ENCODE measurements at regions of chrX and their contacts with region 1.

Region 1: DNA sequence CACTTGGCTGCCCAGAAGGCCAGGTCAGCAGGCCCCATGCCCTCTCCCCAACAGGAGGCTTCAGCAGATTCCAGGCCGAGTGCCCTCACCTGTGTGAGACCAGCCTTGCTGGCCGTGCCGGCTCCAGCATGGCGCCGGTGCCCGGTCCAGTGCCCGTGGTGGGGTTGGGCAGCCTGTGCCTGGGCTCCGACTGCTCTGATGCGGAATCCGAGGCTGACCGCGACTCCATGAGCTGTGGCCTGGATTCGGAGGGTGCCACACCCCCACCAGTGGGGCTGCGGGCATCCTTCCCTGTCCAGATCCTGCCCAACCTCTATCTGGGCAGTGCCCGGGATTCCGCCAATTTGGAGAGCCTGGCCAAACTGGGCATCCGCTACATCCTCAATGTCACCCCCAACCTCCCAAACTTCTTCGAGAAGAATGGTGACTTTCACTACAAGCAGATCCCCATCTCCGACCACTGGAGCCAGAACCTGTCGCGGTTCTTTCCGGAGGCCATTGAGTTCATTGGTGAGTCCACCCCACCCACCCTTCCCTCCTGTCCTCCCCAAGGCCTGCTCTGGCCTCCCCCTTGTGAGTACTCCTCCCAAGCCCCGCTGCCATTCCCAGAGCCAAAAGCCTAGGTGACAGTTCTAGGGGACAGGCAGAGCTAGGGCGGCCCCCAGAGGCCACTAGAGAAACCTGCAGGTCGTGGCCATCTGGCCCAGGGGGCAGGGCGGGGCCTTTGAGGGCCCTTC is 2.3 kb downstream of the DUSP9 start:
- DNase-seq: no peak
- H3K4me3 Mint-ChIP-seq: no peak overlapping the region
- H3K27ac Mint-ChIP-seq: no peak overlapping the region
- H3K4me1 Mint-ChIP-seq: no peaks in the 10 kb centered on the region
- H3K27me3 Mint-ChIP-seq: peaks cover 22% of the 10 kb centered on the region

Region 2: GRCh38 chrX:153554519-153555167 is 94.7 kb before region 1 on chrX:
- intact Hi-C with region 1: loop called (anchors 1 kb)
- DNase-seq: peak; percentile 35
- H3K4me3 Mint-ChIP-seq: no peak overlapping the region
- H3K27ac Mint-ChIP-seq: no peak overlapping the region
- H3K4me1 Mint-ChIP-seq: no peaks in the 10 kb centered on the region
- H3K27me3 Mint-ChIP-seq: peaks cover 1% of the 10 kb centered on the region

Region 3: DNA sequence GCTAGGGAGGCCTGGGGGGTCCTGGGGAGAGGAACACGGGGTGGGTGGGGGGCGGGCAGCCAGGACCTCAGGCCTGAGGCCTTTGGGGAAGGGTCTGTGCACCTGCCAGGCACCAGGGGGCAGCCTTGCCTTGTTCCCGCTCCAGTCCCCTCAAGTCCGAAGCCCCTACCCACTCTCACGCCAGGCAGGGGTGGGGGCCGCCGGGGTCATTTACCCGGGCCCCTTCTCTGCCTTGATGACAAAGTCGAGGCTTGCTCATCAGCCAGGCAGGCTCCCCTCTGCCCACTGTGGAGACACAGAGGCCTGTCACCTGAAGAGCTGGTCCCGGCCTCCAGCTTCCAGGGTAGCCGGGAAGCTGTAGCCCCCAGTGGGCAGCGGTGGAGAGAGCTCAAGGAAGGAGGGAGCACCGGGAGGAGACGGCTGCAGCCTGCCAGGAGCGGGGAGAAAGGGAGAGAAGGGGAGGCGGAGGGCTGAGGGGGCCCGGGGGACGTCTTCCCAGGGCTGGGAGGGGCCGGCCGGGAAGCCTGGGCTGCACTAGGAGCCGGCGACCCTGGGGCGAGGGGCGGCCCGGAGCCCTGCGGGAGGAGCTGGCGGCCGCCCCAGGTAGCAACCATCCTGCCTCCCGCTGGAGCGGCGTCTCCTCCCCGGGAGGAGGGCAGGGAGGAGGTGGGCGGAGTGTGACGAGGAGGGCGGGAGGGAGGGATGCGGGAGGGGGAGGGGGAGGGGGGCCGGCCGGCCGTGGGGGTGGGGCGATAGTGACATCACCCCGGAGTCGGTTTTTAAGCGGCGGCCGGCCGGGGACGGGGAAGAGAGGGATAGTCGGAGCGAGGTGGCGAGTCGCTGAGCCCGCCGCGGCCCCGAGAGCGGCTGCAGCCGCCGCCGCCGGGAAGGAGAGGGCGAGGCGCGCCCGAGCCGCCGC is 38.0 kb after region 1 on chrX and contains the start of gene SLC6A8:
- intact Hi-C with region 1: no loop called
- DNase-seq: peak; percentile 6
- H3K4me3 Mint-ChIP-seq: peak within 1 kb of the TSS; percentile 66
- H3K27ac Mint-ChIP-seq: no peak within 1 kb of the TSS
- H3K4me1 Mint-ChIP-seq: no peaks in the 10 kb centered on the region
- H3K27me3 Mint-ChIP-seq: peaks cover 10% of the 10 kb centered on the region
- total RNA-seq, gene SLC6A8: 5.9 and 6.0 TPM in 2 replicates